Aorta (tissue), 5 donors: ENCODE measurements at regions of chr13 and their contacts with region 1.

Region 1: GRCh38 chr13:79936368-79937136 is 404.4 kb downstream of the SPRY2 start:
- DNase-seq: peak; percentile 39 to 52
- ATAC-seq: peak; percentile 91
- H3K4me3 ChIP-seq: no peak overlapping the region
- H3K27ac ChIP-seq: peak overlapping the region; percentile 98 to 99
- H3K4me1 ChIP-seq: peaks cover 2 to 3% of the 10 kb centered on the region in 2 donors
- H3K27me3 ChIP-seq: no peaks in the 10 kb centered on the region

Region 2: GRCh38 chr13:79405829-79406596 is 530.5 kb before region 1 on chr13 and contains the start of gene RBM26:
- intact Hi-C with region 1: loop called in 1 of 2 experiments (anchors 10 kb)
- DNase-seq: peak; percentile 96 to 97
- ATAC-seq: peak; percentile 97
- H3K4me3 ChIP-seq: peak within 1 kb of the TSS; percentile 79 to 99
- H3K27ac ChIP-seq: peak within 1 kb of the TSS; percentile 57 to 87
- H3K4me1 ChIP-seq: peaks cover 3 to 6% of the 10 kb centered on the region in 2 donors
- H3K27me3 ChIP-seq: no peaks in the 10 kb centered on the region
- total RNA-seq, gene RBM26: 37.5 to 54.6 TPM

Region 3: DNA sequence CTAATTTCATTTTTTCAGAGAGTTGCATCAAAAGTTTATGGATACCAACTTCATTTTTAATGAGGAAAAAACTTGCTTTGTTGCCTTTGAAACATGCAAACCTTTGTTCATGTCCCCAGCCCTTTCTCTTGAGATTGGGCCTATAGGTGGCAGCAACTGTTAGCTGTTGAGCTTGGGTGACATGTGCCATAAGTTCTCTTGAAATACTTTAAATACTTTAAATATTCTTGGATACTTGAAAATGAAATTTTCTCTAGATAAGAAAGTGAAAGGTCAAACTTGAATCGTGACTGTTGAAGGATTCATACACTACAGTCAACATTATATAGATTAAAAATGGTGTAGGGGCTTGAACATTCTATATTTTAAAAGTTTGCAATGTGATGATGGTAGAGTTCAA is 160.7 kb before region 1 on chr13:
- intact Hi-C with region 1: loop called in 1 of 2 experiments (anchors 5 kb)
- DNase-seq: no peak
- ATAC-seq: no peak
- H3K4me3 ChIP-seq: no peak overlapping the region
- H3K27ac ChIP-seq: no peak overlapping the region
- H3K4me1 ChIP-seq: peaks cover 0 to 2% of the 10 kb centered on the region in 2 donors
- H3K27me3 ChIP-seq: no peaks in the 10 kb centered on the region

Region 4: DNA sequence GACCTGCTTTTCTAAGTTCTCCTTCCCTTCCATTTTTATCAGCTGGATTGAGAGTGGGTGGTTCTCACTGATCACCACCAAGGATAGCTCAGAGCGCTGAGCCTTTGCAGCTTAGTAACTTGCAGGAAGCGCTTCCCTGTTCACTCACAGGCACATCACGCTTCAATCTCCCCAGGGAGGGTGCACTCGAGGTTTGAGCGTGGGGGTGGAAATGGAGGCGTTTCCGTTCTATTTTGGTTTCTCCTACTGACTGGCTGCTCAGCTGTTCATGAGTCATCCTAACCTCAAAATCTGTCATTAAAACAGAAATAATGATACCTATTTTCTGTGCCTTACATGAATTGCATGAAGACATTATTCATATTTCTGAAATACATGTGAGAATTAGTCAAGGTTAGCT is 112.2 kb after region 1 on chr13:
- intact Hi-C with region 1: loop called in 1 of 2 experiments (anchors 5 kb)
- DNase-seq: peak; percentile 91 to 94
- ATAC-seq: peak; percentile 89
- H3K4me3 ChIP-seq: no peak overlapping the region
- H3K27ac ChIP-seq: no peak overlapping the region
- H3K4me1 ChIP-seq: peaks cover 0 to 5% of the 10 kb centered on the region in 2 donors
- H3K27me3 ChIP-seq: no peaks in the 10 kb centered on the region

Region 5: GRCh38 chr13:80132741-80133601 is 196.4 kb after region 1 on chr13:
- intact Hi-C with region 1: loop called in 1 of 2 experiments (anchors 5 kb)
- DNase-seq: peak in 1 of 2 donors; percentile 55
- ATAC-seq: peak; percentile 81
- H3K4me3 ChIP-seq: peak overlapping the region; percentile 0 to 21
- H3K27ac ChIP-seq: peak overlapping the region; percentile 66 to 84
- H3K4me1 ChIP-seq: peaks cover 0 to 1% of the 10 kb centered on the region in 2 donors
- H3K27me3 ChIP-seq: no peaks in the 10 kb centered on the region

Region 6: DNA sequence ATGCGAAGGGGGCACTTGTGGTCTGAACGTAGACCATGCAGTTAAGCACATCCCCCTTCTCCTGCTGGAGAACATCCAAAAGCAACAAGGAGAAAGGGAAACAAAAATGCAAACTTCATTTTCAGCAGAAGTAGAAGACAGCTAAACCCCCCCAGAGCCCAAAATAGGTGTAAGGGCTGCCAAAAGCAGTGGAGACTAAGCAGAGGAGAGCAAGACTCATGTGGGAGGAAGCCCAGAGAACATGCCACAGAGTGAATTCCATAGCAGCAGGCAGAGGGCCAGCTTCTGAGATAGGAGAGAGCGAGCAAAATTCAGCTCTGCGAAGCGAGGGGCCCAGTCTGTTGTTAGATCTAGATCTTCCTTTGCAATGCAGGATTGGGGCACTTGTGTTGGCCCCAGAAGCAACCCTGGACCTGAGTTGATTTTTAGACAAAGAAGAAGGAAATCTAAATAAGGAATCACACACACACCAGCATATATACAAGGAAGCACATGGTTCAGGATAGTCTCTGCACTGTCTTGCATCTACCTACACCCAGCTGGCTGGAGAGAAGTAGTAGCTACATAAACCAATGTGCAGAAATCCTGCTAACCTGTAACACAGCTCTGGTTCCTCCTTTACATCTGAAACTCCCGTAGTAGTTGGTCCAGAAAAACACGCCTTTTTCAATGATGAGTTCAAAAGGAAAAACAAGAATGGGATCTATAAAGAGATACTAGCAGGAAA is 204.7 kb after region 1 on chr13:
- intact Hi-C with region 1: loop called in 1 of 2 experiments (anchors 5 kb)
- DNase-seq: peak; percentile 79
- ATAC-seq: peak; percentile 64
- H3K4me3 ChIP-seq: no peak overlapping the region
- H3K27ac ChIP-seq: peak overlapping the region in 1 of 2 donors; percentile 78
- H3K4me1 ChIP-seq: peaks cover 0 to 4% of the 10 kb centered on the region in 2 donors
- H3K27me3 ChIP-seq: no peaks in the 10 kb centered on the region

Region 7: GRCh38 chr13:80342471-80343380 is 406.2 kb after region 1 on chr13:
- intact Hi-C with region 1: loop called (anchors 5 to 10 kb)
- DNase-seq: peak; percentile 87 to 95
- ATAC-seq: peak; percentile 86
- H3K4me3 ChIP-seq: peak overlapping the region; percentile 81 to 86
- H3K27ac ChIP-seq: peak overlapping the region; percentile 14 to 83
- H3K4me1 ChIP-seq: no peaks in the 10 kb centered on the region
- H3K27me3 ChIP-seq: no peaks in the 10 kb centered on the region